WTC11 (cell line): ENCODE measurements at regions of chr16 and their contacts with region 1.

Region 1: GRCh38 chr16:11370084-11370931 is 25.0 kb downstream of the RMI2 start:
- DNase-seq: no peak
- ATAC-seq: no peak
- H3K4me3 Mint-ChIP-seq: no peak overlapping the region
- H3K27ac Mint-ChIP-seq: peak overlapping the region; percentile 4; the same call in 1 of the 2 replicates
- H3K4me1 Mint-ChIP-seq: peaks cover 18% of the 10 kb centered on the region
- H3K27me3 Mint-ChIP-seq: no peaks in the 10 kb centered on the region
- CTCF ChIP-seq: no peak

Region 2: GRCh38 chr16:11143372-11144035 is 226.8 kb before region 1 on chr16:
- CTCF ChIA-PET with region 1: interaction called, 12 read pairs
- POLR2A ChIA-PET with region 1: no interaction called
- DNase-seq: no peak
- ATAC-seq: no peak
- H3K4me3 Mint-ChIP-seq: no peak overlapping the region
- H3K27ac Mint-ChIP-seq: no peak overlapping the region
- H3K4me1 Mint-ChIP-seq: peaks cover 21% of the 10 kb centered on the region
- H3K27me3 Mint-ChIP-seq: no peaks in the 10 kb centered on the region
- CTCF ChIP-seq: no peak

Region 3: DNA sequence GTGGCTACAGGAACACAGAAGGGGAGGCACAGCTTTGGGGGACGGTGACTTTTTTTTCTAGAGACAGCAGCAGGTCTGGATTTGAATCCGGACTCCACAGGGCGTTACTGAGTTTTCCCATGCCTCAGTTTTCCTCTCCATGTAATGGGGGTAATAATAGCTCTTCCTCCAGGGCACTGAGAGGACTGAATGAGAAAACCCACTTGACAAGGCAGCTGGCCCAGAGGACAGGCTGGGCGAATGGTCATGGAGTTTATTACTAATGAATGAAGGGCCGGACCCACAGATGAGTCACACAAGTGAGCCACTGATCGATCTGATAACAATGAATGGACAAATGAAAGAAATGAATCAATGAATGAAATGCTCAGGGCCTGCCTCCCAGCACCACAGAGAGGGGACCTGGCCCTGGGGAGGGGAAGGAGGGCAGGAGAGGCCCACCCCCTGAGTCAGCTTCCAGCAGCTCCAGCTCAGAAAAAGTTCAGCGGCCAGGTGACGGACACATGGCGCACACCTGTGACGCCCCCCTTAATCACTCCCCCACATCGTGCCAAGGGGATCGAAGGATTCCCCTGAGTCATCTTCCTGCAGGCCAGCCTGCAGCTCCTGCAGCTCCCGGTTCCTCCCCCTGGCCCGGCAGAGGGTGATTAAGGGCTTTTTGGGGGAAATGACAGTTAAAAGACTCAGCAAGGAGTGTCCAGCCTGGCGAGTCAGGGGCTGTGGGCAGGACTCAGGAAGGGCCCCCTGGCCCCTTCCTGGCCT is 168.6 kb before region 1 on chr16:
- CTCF ChIA-PET with region 1: interaction called, 19 read pairs
- POLR2A ChIA-PET with region 1: no interaction called
- DNase-seq: peak; percentile 56
- ATAC-seq: peak; percentile 56
- H3K4me3 Mint-ChIP-seq: no peak overlapping the region
- H3K27ac Mint-ChIP-seq: 0 out of 2 replicates have a peak overlapping the region, but pooled peaks have one; percentile 25
- H3K4me1 Mint-ChIP-seq: peaks cover 41% of the 10 kb centered on the region
- H3K27me3 Mint-ChIP-seq: no peaks in the 10 kb centered on the region; the same call in 1 of the 2 replicates
- CTCF ChIP-seq: no peak

Region 4: DNA sequence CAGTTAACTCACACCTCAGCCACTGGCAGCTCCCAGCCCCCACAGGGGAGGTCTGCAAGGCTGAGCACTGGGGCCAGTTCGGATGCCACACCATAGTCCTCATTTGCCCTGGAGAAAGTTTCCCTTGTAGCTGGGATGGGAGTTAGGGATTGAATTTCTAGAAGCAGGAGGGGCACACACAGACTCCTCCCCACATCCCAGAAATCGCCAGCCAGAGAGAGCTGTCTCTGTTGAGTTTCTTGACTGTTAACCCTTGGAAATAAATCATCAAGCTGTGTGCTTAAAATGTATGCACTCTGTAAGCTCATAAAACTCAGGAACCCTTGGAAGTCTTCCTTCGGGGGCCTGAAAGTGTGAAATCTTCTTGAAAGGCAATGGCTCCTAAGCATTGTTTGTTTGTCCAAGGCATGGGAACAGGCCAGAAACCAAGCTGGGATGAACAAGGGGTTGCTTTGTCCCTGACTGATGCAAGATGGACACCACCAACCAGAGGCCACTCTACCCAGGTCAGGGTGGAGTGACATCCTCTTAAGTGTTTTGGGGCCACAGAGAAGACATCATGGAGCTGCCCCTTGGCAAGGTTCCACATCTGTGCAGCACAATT is 96.5 kb before region 1 on chr16:
- CTCF ChIA-PET with region 1: interaction called, 15 read pairs
- POLR2A ChIA-PET with region 1: no interaction called
- DNase-seq: no peak
- ATAC-seq: peak; percentile 27; the same call in 1 of the 2 replicates
- H3K4me3 Mint-ChIP-seq: no peak overlapping the region
- H3K27ac Mint-ChIP-seq: peak overlapping the region; percentile 49; the same call in 1 of the 2 replicates
- H3K4me1 Mint-ChIP-seq: peaks cover 9% of the 10 kb centered on the region
- H3K27me3 Mint-ChIP-seq: no peaks in the 10 kb centered on the region; the same call in 1 of the 2 replicates
- CTCF ChIP-seq: no peak

Region 5: DNA sequence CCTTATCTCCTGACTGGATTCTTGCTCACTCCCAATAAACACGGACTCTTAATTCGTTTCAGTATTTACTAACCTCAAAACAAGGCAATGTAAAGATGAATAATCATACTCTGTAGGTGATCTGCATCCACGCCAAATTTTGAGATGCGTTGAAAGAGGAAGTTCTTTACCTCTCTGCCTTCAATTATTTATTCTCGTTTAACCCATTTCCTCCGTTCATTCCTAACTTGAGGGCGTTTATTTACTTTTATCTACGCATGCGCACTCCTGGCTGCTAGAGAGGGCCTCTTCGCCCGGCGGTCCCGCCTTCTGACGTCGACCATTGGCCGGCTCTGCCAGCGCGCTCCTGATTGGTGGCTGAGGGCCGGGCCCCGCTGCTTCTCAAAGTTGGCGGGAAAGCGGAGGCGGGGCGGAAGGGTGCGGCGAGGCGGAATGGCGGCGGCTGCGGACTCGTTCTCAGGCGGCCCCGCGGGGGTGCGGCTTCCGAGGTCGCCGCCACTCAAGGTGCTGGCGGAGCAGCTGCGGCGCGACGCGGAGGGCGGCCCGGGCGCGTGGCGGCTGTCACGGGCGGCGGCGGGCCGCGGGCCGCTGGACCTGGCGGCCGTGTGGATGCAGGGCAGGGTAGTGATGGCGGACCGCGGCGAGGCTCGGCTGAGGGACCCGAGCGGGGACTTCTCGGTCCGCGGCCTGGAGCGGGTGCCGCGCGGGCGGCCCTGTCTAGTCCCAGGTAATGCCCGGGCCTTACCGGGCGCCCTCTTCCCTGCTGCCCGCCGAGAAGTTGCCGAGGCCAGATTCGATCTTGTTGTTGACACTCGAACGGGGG is 25.1 kb before region 1 on chr16 and contains the start of gene RMI2:
- CTCF ChIA-PET with region 1: interaction called, 14 read pairs
- POLR2A ChIA-PET with region 1: no interaction called
- DNase-seq: peak; percentile 98
- ATAC-seq: peak; percentile 93
- H3K4me3 Mint-ChIP-seq: peak within 1 kb of the TSS; percentile 91
- H3K27ac Mint-ChIP-seq: peak within 1 kb of the TSS; percentile 98
- H3K4me1 Mint-ChIP-seq: peaks cover 66% of the 10 kb centered on the region
- H3K27me3 Mint-ChIP-seq: no peaks in the 10 kb centered on the region
- CTCF ChIP-seq: no peak
- total RNA-seq, gene RMI2: 77.2 to 83.4 TPM (median 79.0 TPM) in 3 replicates

Region 6: DNA sequence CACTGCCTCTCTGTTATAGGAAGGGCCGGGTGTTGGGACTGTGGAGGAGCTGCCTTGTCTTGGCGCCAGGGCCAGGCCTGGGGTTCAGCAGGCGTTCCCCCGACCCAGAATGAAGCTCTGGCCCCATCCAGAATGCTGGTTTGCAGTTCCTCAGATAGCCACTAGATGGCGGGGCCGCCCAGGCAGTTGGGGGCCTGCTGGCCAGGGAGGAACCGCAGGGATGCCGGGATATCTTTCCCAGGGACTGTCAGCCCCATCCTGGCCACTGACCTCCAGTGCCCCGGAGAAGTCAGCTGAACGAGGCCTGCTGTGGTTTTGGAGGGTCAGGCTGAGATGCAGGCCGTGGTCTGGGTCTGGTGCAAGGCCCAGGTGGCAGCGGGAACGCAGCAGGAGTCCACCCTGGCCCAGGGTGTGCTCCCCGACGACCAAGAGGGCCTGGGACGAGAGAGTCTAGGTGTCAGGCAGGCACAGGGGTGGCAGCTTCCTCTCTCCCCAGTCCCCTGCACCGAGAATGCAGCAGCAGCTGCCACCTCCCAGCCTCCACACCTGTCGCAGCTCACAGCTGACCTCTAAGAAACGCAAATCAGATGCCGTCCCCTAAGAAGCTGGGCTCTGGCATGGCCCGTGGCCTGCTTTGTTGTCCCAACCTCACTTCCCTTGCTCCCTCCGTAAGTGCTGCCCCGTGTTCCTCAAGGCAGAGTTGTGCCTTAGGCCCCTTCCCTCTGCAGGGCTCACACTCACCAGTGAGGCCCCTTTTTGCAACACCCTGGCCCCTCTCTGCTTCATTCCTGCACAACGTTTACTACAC is 26.1 kb after region 1 on chr16:
- CTCF ChIA-PET with region 1: interaction called, 28 read pairs
- POLR2A ChIA-PET with region 1: no interaction called
- DNase-seq: peak; percentile 93
- ATAC-seq: peak; percentile 80
- H3K4me3 Mint-ChIP-seq: no peak overlapping the region
- H3K27ac Mint-ChIP-seq: peak overlapping the region; percentile 41; the same call in 1 of the 2 replicates
- H3K4me1 Mint-ChIP-seq: peaks cover 8% of the 10 kb centered on the region; the same call in 1 of the 2 replicates
- H3K27me3 Mint-ChIP-seq: no peaks in the 10 kb centered on the region
- CTCF ChIP-seq: peak; percentile 100